Activated CD4-positive, alpha-beta T cell treated with anti-CD3 and anti-CD28 coated beads for 36 hours (primary cell): ENCODE measurements at regions of chr4 and their contacts with region 1.

Region 1: DNA sequence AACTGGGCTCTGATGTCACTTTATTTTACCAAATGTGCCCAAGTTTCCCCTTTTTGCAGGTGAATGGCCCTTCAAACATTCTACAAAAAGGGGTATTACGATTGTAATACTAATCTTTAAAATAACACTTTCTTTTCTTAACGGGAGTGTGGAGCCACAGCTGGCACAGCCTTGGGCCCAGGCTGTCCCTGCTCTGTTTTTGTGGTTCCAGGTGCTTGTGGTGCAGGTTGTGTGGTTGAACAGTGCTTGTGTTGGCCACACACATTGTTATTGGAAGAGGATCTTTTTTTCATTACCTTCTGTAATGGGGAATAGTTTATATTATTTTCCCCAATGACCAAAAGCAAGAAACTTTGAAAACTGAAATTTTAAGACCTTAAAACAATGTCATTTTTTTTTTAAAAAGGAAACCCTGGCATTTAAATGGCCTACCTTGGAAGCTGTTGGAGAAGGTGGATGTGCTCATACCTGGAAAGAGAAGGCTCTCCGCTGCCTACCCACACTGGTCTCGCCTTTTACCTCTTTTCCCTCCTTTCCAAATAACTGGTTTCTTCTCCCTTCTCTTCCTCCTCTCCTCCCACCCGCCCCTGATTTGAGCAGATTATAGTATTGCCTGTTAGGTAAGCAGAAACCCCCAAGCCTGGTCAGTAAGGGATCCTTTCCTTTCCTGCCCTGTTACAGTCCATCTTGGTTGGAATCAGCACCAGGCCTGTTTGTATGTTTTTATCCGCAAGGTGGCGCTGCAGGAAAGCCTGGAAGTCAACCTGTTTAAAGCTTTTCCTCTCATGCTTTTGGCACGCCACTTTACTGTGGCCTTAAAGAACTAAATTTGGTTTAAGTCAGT is 28.6 kb downstream of the HADH start:
- DNase-seq: peak; percentile 91
- ATAC-seq: peak; percentile 89
- H3K4me3 Mint-ChIP-seq: no peak overlapping the region
- H3K27ac Mint-ChIP-seq: no peak overlapping the region
- H3K4me1 Mint-ChIP-seq: peaks cover 10% of the 10 kb centered on the region
- H3K27me3 Mint-ChIP-seq: no peaks in the 10 kb centered on the region

Region 2: GRCh38 chr4:107870916-107871786 is 147.1 kb before region 1 on chr4:
- CTCF ChIA-PET with region 1: no interaction called
- POLR2A ChIA-PET with region 1: no interaction called
- intact Hi-C with region 1: no loop called
- DNase-seq: no peak
- ATAC-seq: no peak
- H3K4me3 Mint-ChIP-seq: no peak overlapping the region
- H3K27ac Mint-ChIP-seq: no peak overlapping the region
- H3K4me1 Mint-ChIP-seq: no peaks in the 10 kb centered on the region
- H3K27me3 Mint-ChIP-seq: peaks cover 4% of the 10 kb centered on the region

Region 3: GRCh38 chr4:108036213-108036612 is 18.0 kb after region 1 on chr4:
- CTCF ChIA-PET with region 1: interaction called, 47 read pairs
- POLR2A ChIA-PET with region 1: no interaction called
- intact Hi-C with region 1: no loop called
- DNase-seq: peak; percentile 86
- ATAC-seq: peak; percentile 74
- H3K4me3 Mint-ChIP-seq: peak overlapping the region; percentile 59
- H3K27ac Mint-ChIP-seq: peak overlapping the region; percentile 94
- H3K4me1 Mint-ChIP-seq: peaks cover 65% of the 10 kb centered on the region
- H3K27me3 Mint-ChIP-seq: no peaks in the 10 kb centered on the region

Region 4: DNA sequence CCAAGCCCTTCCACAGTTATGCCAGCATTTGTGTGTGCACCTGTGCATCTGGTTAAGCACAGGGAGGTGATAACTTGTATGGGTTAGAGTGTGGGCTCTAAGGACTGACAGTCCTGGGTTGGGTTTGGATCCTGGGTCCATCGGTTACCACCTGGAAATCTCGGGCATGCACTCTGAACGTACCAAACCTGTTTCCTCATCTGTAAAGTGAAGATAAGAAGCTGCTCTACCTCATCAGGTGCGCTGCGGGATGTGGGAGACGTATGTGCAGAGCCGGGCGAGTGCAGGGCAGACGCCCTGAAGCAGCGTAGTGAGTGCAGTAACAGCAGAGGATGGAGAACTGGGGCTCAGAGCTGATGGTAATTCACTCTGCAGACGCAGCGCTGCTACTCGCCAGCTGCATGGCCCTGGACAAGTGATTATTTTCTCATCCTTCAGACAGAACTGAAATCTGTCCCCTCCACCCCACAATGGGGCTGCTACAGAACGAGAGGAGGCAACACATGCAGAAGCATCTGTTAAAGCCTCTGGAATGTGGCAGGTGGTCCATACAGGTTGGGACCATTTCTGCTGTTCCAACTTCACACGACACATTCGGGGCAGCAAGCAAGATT is 35.9 kb after region 1 on chr4:
- CTCF ChIA-PET with region 1: interaction called, 15 read pairs
- POLR2A ChIA-PET with region 1: no interaction called
- intact Hi-C with region 1: no loop called
- DNase-seq: peak; percentile 42
- ATAC-seq: no peak
- H3K4me3 Mint-ChIP-seq: no peak overlapping the region
- H3K27ac Mint-ChIP-seq: peak overlapping the region; percentile 72
- H3K4me1 Mint-ChIP-seq: peaks cover 95% of the 10 kb centered on the region
- H3K27me3 Mint-ChIP-seq: no peaks in the 10 kb centered on the region

Region 5: GRCh38 chr4:108492816-108493595 is 474.7 kb after region 1 on chr4:
- CTCF ChIA-PET with region 1: interaction called, 6 read pairs
- POLR2A ChIA-PET with region 1: no interaction called
- intact Hi-C with region 1: loop called in 1 of 2 experiments (anchors 1 kb)
- DNase-seq: peak; percentile 57
- ATAC-seq: peak; percentile 77
- H3K4me3 Mint-ChIP-seq: no peak overlapping the region
- H3K27ac Mint-ChIP-seq: no peak overlapping the region
- H3K4me1 Mint-ChIP-seq: no peaks in the 10 kb centered on the region
- H3K27me3 Mint-ChIP-seq: no peaks in the 10 kb centered on the region

Region 6: GRCh38 chr4:108570993-108571569 is 552.8 kb after region 1 on chr4:
- CTCF ChIA-PET with region 1: interaction called, 49 read pairs
- POLR2A ChIA-PET with region 1: interaction called, 5 read pairs
- intact Hi-C with region 1: loop called (anchors 1 kb)
- DNase-seq: no peak
- ATAC-seq: no peak
- H3K4me3 Mint-ChIP-seq: no peak overlapping the region
- H3K27ac Mint-ChIP-seq: no peak overlapping the region
- H3K4me1 Mint-ChIP-seq: peaks cover 23% of the 10 kb centered on the region
- H3K27me3 Mint-ChIP-seq: no peaks in the 10 kb centered on the region

Region 7: GRCh38 chr4:109406338-109406931 is 1388.2 kb after region 1 on chr4:
- CTCF ChIA-PET with region 1: no interaction called
- POLR2A ChIA-PET with region 1: no interaction called
- intact Hi-C with region 1: loop called in 1 of 2 experiments (anchors 5 kb)
- DNase-seq: peak; percentile 40
- ATAC-seq: peak; percentile 76
- H3K4me3 Mint-ChIP-seq: no peak overlapping the region
- H3K27ac Mint-ChIP-seq: no peak overlapping the region
- H3K4me1 Mint-ChIP-seq: no peaks in the 10 kb centered on the region
- H3K27me3 Mint-ChIP-seq: peaks cover 6% of the 10 kb centered on the region